ENCODE measurements at regions of chr2 and their contacts with region 1.

Region 1: GRCh38 chr2:120833127-120833675 is 97.5 kb downstream of the GLI2 start:
- DNase-seq: no peak
- H3K4me3 ChIP-seq: no peak overlapping the region
- H3K27ac ChIP-seq: no peak overlapping the region
- H3K27me3 ChIP-seq: no peaks in the 10 kb centered on the region
- CTCF ChIP-seq: no peak

Region 2: GRCh38 chr2:120856421-120856862 is 23.2 kb after region 1 on chr2:
- intact Hi-C with region 1: loop called in 1 of 2 experiments (anchors 2 kb)
- DNase-seq: peak in 1 of 10 donors; percentile 32
- H3K4me3 ChIP-seq: no peak overlapping the region
- H3K27ac ChIP-seq: no peak overlapping the region
- H3K27me3 ChIP-seq: no peaks in the 10 kb centered on the region
- CTCF ChIP-seq: no peak

Region 3: GRCh38 chr2:121147766-121148165 is 314.6 kb after region 1 on chr2:
- intact Hi-C with region 1: no loop called
- DNase-seq: no peak
- H3K4me3 ChIP-seq: no peak overlapping the region
- H3K27ac ChIP-seq: no peak overlapping the region
- H3K27me3 ChIP-seq: no peaks in the 10 kb centered on the region
- CTCF ChIP-seq: no peak

Measured in dorsolateral prefrontal cortex (tissue), 120 donors.